ENCODE measurements at regions of chr9 and their contacts with region 1.

Region 1: DNA sequence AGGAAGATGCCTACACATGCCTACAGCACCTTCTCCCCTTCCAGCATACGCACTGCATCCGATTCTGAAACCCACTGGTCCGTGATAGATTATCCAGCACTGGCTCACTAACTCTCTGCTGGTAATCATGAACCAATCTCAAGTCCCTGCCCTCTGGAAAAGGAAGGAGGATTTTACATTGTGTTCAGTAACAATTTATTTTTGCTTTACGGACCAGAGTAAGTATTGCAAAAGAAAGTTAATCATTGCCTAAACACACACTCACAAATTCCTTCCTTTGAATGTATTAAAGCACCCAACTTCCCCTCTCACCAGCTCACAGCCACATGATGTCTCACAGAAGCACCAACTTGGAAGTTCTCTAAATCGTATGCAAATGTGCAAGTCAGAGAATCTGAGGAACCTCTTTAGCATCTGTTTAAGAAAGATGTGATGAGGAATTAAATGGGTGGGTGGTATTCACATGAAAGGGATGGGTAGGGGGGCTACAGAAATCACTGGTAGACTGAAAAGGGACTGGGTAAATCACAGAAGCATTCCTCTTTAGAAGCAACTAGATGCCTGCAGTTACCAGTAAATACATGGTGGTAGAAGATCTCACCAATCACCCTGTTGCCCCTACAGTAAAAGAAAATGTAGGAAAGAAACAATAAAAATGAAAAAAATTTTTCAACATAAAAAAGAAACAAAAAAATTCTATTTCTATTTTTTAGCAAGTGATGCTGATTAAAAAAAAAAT is 8.4 kb downstream of the GNAQ start:
- DNase-seq: no peak
- ATAC-seq: peak; percentile 72

Region 2: DNA sequence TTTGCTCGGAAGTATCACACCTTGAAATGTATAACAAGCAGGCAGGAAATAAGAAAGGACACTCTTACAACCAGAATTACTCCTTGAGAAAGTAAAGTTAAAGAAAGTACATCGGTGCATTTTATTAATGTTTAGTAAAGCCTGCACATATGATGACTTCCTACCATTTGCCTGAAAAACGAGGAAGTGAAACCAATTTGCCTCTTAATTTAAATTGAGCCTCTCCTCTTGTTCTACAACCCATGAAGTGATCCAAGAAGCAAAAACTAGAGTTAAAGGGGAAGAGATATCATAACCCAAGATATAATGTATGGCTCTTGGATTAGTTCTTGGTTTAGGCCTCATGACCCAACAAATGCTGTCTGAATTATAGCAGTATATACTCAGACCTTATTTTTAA is 87.2 kb before region 1 on chr9:
- intact Hi-C with region 1: no loop called
- DNase-seq: no peak
- ATAC-seq: no peak

Region 3: GRCh38 chr9:77977210-77977611 is 46.0 kb before region 1 on chr9:
- intact Hi-C with region 1: loop called (anchors 10 kb)
- DNase-seq: peak; percentile 63
- ATAC-seq: peak; percentile 89

Region 4: GRCh38 chr9:78035383-78035993 is 12.3 kb after region 1 on chr9:
- intact Hi-C with region 1: no loop called
- DNase-seq: peak; percentile 30
- ATAC-seq: peak; percentile 9

Region 5: GRCh38 chr9:78187763-78188484 is 164.8 kb after region 1 on chr9:
- intact Hi-C with region 1: no loop called
- DNase-seq: peak; percentile 47
- ATAC-seq: peak; percentile 36